ENCODE measurements at regions of chr7 and their contacts with region 1.

Region 1: GRCh38 chr7:100726996-100727761 is 6.2 kb upstream of the ZAN start:
- DNase-seq: no peak
- H3K4me3 ChIP-seq: no peak overlapping the region
- H3K27ac ChIP-seq: no peak overlapping the region
- H3K4me1 ChIP-seq: no peaks in the 10 kb centered on the region
- H3K27me3 ChIP-seq: no peaks in the 10 kb centered on the region; a peak in 3 of 7 replicates
- CTCF ChIP-seq: no peak
- EP300 ChIP-seq: no peak
- POLR2A ChIP-seq: no peak
- RAD21 ChIP-seq: no peak

Region 2: GRCh38 chr7:100418930-100419659 is 308.1 kb before region 1 on chr7:
- CTCF ChIA-PET with region 1: no interaction called
- POLR2A ChIA-PET with region 1: no interaction called
- DNase-seq: no peak
- H3K4me3 ChIP-seq: no peak overlapping the region
- H3K27ac ChIP-seq: no peak overlapping the region
- H3K4me1 ChIP-seq: no peaks in the 10 kb centered on the region
- H3K27me3 ChIP-seq: no peaks in the 10 kb centered on the region
- CTCF ChIP-seq: no peak
- EP300 ChIP-seq: no peak
- POLR2A ChIP-seq: no peak
- RAD21 ChIP-seq: no peak

Region 3: DNA sequence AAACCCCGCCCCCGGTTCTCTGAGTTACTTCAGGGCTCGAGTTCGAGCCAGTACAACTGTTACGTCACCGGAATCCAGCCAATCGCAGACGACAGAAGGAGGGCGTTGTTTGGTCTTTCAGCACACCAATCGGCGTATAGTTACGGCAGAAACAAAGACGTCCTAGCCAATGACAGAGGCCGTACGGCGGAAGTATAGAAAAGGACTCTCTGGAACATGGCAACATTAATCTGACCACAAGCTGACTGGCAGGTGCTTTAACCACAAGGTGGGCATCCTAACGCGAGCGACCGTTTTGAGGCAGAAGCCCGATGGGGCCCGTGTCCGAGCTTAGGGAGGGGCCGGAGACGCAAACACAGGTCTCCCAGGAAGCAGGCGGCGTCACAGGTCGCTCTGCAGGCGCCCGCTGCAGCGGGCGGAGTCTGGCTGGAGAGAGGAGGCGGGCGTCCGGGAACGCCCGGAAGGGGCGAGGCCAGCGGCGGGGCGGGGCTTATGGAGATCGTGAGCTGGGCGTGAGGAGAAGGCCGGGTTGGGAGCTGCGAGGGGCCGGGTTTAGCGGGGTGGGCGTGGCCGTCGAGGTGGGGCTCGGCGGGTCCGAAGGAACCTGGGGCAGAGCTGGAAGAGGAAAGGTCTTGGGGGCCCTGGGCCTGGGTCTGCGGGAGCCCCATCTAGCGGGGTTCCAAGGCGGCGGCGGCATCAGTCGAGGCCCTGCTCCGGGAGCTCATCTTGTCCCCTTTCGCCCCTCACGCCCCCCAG is 115.0 kb before region 1 on chr7 and contains the start of gene MOSPD3:
- CTCF ChIA-PET with region 1: interaction called, 13 read pairs
- POLR2A ChIA-PET with region 1: no interaction called
- DNase-seq: peak; percentile 98 to 99
- H3K4me3 ChIP-seq: peak within 1 kb of the TSS; percentile 74 to 83 (median 76)
- H3K27ac ChIP-seq: peak within 1 kb of the TSS; percentile 98
- H3K4me1 ChIP-seq: peaks cover 0 to 6% (median 2%) of the 10 kb centered on the region in 4 experiments; a peak in 3 of 7 replicates
- H3K27me3 ChIP-seq: no peaks in the 10 kb centered on the region; a peak in 1 of 7 replicates
- CTCF ChIP-seq: no peak
- EP300 ChIP-seq: no peak
- POLR2A ChIP-seq: peak in 1 of 2 experiments; percentile 93; a peak in 2 of 3 replicates
- RAD21 ChIP-seq: no peak
- total RNA-seq, gene MOSPD3: 19.3 and 20.7 TPM in 2 replicates

Region 4: GRCh38 chr7:100745184-100745583 is 18.0 kb after region 1 on chr7:
- CTCF ChIA-PET with region 1: interaction called, 23 read pairs
- POLR2A ChIA-PET with region 1: interaction called, 31 read pairs
- DNase-seq: no peak
- H3K4me3 ChIP-seq: peak overlapping the region; percentile 34 to 65 (median 50); a peak in 7 of 8 replicates
- H3K27ac ChIP-seq: no peak overlapping the region; the same call in 1 of the 2 replicates
- H3K4me1 ChIP-seq: no peaks in the 10 kb centered on the region
- H3K27me3 ChIP-seq: no peaks in the 10 kb centered on the region
- CTCF ChIP-seq: no peak
- EP300 ChIP-seq: no peak
- POLR2A ChIP-seq: no peak
- RAD21 ChIP-seq: no peak